ENCODE measurements at regions of chr12 and their contacts with region 1.

Region 1: GRCh38 chr12:50763639-50764285 is at the start of gene ATF1:
- DNase-seq: peak; percentile 89
- ATAC-seq: peak; percentile 86
- H3K4me3 Mint-ChIP-seq: peak within 1 kb of the TSS; percentile 91
- H3K27ac Mint-ChIP-seq: peak within 1 kb of the TSS; percentile 97
- H3K4me1 Mint-ChIP-seq: peaks cover 31% of the 10 kb centered on the region
- H3K27me3 Mint-ChIP-seq: no peaks in the 10 kb centered on the region
- CTCF ChIP-seq: no peak
- total RNA-seq, gene ATF1: 34.6 to 36.6 TPM (median 34.8 TPM) in 3 replicates

Region 2: DNA sequence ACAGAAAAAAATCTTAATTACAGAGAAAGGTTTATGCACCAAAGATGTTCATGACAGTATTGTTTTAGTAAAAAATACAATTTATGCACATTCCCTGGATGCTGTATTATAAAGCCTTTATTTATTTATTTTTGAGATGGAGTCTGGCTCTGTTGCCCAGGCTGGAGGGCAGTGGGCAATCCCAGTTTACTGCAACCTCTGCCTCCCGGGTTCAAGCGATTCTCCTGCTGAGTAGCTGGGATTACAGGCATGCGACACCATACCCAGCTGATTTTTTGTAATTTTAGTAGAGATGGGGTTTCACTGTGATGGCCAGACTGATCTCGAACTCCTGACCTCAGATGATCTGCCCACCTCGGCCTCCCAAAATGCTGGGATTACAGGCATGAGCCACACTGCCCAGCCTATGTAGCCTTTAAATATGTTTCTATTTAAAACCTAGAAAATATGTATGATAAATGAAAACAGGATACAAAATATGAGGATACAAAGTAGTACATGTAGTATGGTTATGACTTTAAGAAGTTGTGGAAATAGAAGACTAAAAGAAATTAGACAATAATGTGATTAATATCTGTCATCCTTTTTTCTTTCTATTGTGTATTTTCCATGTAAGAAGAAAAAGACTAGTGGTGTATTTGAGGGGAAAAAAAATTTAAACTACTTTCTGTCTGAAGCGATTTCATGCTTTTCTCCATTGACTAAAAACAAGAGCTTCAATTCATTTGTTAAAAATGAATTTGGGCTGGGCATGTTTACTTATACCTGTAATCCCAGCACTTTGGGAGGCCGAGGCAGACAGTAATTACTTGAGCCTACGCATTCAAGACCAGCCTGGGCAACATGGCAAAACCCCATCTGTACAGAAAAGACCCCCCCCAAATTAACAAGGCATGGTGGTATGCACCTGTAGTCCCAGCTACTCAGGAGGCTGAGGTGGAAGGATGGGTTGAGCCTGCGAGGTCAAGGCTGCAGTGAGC is 13.3 kb after region 1 on chr12:
- CTCF ChIA-PET with region 1: interaction called, 20 read pairs
- POLR2A ChIA-PET with region 1: interaction called, 3 read pairs
- DNase-seq: no peak
- ATAC-seq: no peak
- H3K4me3 Mint-ChIP-seq: no peak overlapping the region
- H3K27ac Mint-ChIP-seq: no peak overlapping the region
- H3K4me1 Mint-ChIP-seq: no peaks in the 10 kb centered on the region
- H3K27me3 Mint-ChIP-seq: no peaks in the 10 kb centered on the region
- CTCF ChIP-seq: no peak

Region 3: GRCh38 chr12:50806176-50806575 is 42.4 kb after region 1 on chr12:
- CTCF ChIA-PET with region 1: no interaction called
- POLR2A ChIA-PET with region 1: no interaction called
- DNase-seq: no peak
- ATAC-seq: no peak
- H3K4me3 Mint-ChIP-seq: no peak overlapping the region
- H3K27ac Mint-ChIP-seq: no peak overlapping the region
- H3K4me1 Mint-ChIP-seq: no peaks in the 10 kb centered on the region
- H3K27me3 Mint-ChIP-seq: no peaks in the 10 kb centered on the region
- CTCF ChIP-seq: no peak

Region 4: DNA sequence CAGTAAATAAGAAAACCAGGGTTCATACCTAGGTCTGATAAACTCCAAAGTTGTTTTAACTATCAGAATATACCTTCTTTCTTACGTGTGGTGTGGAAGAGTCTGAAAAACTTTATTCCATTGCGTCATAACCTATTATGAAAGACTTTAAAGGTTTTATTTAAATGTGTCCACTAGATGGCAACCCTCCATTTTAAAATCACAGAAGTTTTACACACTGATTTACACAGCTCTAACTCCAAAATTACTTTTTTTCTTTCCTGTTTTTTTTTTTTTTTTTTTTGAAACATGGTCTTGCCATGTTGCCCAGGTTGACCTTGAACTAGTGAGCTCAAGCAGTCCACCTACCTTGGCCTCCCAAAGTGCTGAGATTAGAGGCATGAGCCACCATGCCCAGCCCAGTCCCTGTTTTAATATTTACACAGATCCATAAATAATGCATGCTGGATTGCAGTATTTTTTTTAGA is 61.6 kb after region 1 on chr12:
- CTCF ChIA-PET with region 1: interaction called, 14 read pairs
- POLR2A ChIA-PET with region 1: no interaction called
- DNase-seq: no peak
- ATAC-seq: no peak; the same call in 1 of the 2 replicates
- H3K4me3 Mint-ChIP-seq: no peak overlapping the region
- H3K27ac Mint-ChIP-seq: no peak overlapping the region
- H3K4me1 Mint-ChIP-seq: no peaks in the 10 kb centered on the region
- H3K27me3 Mint-ChIP-seq: no peaks in the 10 kb centered on the region
- CTCF ChIP-seq: peak; percentile 34

Region 5: DNA sequence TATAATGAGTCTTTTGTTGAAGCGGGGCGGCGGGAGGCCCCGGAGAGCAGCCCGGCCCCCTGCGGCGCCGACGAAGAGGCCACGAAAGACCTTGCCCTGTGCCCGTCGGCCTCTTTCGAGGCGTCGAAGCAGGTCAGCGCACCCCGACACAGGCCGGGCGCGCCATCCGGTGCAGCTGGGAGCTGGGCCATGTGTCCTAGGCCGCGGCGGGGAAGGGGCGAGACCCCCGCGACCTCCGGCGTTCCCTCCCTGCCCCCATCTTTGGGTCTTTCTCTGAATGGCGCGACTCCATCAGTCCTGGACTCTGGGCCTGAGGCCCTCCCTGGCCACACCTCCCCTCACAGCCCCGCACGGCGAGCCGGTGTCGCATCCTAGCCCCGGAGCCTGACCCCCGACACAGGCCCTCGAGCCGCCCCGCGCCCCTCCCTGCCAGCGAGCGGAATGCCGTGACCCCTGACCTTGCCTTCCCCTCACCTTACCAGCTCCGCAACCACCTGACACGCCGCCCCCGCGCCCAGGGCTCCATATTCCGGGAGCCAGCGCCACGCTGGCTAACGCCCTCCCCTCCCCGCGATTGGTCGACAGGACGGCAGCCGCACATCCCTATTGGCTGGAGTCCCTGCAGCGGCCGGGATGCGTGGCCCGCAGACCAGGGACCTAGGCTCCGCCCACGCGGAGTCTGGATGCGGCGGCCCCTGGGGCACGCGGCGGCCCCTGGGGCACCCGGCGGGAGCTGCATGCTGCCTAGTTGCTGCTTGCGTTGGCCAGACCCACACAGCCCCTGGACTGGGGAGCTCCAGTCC is 262.3 kb after region 1 on chr12 and contains the start of gene SLC11A2:
- CTCF ChIA-PET with region 1: interaction called, 43 read pairs
- POLR2A ChIA-PET with region 1: interaction called, 6 read pairs
- DNase-seq: peak; percentile 97
- ATAC-seq: peak; percentile 94
- H3K4me3 Mint-ChIP-seq: peak within 1 kb of the TSS; percentile 87
- H3K27ac Mint-ChIP-seq: peak within 1 kb of the TSS; percentile 93
- H3K4me1 Mint-ChIP-seq: peaks cover 47% of the 10 kb centered on the region
- H3K27me3 Mint-ChIP-seq: no peaks in the 10 kb centered on the region
- CTCF ChIP-seq: no peak
- total RNA-seq, gene SLC11A2: 48.6 to 58.0 TPM (median 54.6 TPM) in 3 replicates